GM10248 (cell line): ENCODE measurements at regions of chr5 and their contacts with region 1.

Region 1: DNA sequence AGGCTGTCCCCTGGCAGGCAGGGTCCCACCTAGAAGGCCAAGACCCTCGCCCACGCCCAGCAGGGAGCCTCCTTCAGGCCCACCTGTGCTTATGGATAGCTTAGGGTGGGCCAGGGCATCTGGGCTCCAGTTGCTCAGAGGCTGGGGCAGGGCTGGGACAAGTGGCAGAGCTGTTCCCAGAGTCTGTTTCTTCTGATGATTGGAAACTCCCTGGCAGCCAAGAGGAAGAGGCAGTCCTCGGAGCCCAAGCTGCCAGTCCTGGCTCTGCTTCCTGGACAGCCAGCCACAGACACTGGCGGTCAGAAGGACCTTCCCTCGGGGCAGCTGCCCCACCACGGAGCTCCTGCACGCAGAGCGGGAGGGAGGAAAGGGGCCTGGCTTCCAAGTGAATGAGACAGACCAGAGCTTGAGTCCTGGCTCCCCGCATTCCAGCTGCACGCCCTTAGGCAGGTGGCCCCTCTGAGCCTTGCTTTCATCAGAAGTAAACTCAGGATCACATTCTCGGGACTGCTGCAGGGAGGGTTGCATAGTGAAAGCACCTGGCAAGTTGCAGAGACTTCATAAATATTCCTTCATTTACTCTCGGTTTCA is 37.9 kb upstream of the GABRP start:
- DNase-seq: no peak
- CTCF ChIP-seq: no peak

Region 2: GRCh38 chr5:170791325-170791954 is 45.9 kb after region 1 on chr5:
- CTCF ChIA-PET with region 1: interaction called, 30 read pairs
- POLR2A ChIA-PET with region 1: no interaction called
- DNase-seq: peak; percentile 52
- CTCF ChIP-seq: peak; percentile 44

Region 3: GRCh38 chr5:171659896-171660295 is 914.3 kb after region 1 on chr5:
- CTCF ChIA-PET with region 1: no interaction called
- POLR2A ChIA-PET with region 1: no interaction called
- DNase-seq: no peak
- CTCF ChIP-seq: no peak